Activated T-helper 2 cell treated with anti-CD3 and anti-CD28 coated beads, Interferon-gamma antibody, Interleukin-2, Interleukin-4, amounts not matched to agents 10 μg/mL and 5 μg/mL and 100 μg/mL, durations not matched to agents 14 hours and 24 hours and 36 hours (primary cell): ENCODE measurements at regions of chr3 and their contacts with region 1.

Region 1: GRCh38 chr3:195718475-195719325 is 2.1 kb upstream of the MUC20 start:
- DNase-seq: no peak
- H3K4me3 Mint-ChIP-seq: no peak overlapping the region
- H3K27ac Mint-ChIP-seq: no peak overlapping the region
- H3K4me1 Mint-ChIP-seq: peaks cover 5% of the 10 kb centered on the region
- H3K27me3 Mint-ChIP-seq: no peaks in the 10 kb centered on the region

Region 2: GRCh38 chr3:195352895-195353488 is 365.7 kb before region 1 on chr3:
- intact Hi-C with region 1: no loop called
- DNase-seq: no peak
- H3K4me3 Mint-ChIP-seq: no peak overlapping the region
- H3K27ac Mint-ChIP-seq: no peak overlapping the region
- H3K4me1 Mint-ChIP-seq: peaks cover 3% of the 10 kb centered on the region
- H3K27me3 Mint-ChIP-seq: no peaks in the 10 kb centered on the region

Region 3: GRCh38 chr3:195616712-195617086 is 102.0 kb before region 1 on chr3:
- intact Hi-C with region 1: loop called (anchors 2 kb)
- DNase-seq: no peak
- H3K4me3 Mint-ChIP-seq: no peak overlapping the region
- H3K27ac Mint-ChIP-seq: no peak overlapping the region
- H3K4me1 Mint-ChIP-seq: peaks cover 18% of the 10 kb centered on the region
- H3K27me3 Mint-ChIP-seq: no peaks in the 10 kb centered on the region

Region 4: DNA sequence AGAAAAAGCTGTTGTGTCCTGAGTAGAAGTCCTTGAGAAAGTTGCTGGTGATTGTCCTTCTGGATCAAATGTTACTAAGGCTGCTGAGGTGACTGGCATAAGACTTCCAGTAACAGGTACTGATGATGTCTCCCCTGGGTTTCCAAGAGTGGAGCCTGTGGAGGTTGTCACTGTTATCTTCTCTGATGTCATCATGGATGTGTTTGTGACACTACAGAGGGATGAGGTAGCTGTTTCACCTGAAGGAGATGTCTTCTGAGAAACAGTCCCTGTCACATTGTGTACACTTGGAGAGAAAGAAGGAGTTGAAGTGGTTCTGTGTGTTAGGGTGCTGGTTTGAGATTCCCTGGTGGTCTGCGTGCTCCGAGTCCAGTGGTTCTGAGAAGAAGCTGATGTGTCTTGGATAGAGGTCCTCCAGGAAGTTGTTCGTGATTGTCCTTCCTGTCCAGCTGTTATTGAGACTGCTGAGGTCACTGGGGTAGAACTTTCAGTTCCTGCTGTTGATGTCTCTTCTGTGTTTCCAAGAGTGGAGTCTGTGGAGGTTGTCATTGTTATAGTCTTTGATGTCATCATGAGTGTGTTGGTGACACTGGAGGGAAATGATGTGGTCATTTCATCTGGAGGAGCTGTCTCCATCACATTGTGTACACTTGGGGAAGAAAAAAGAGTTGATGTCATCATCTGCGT is 72.1 kb after region 1 on chr3:
- intact Hi-C with region 1: no loop called
- DNase-seq: no peak
- H3K4me3 Mint-ChIP-seq: no peak overlapping the region
- H3K27ac Mint-ChIP-seq: no peak overlapping the region
- H3K4me1 Mint-ChIP-seq: peaks cover 26% of the 10 kb centered on the region
- H3K27me3 Mint-ChIP-seq: peaks cover 12% of the 10 kb centered on the region